Posterior vena cava (tissue), 2 donors: ENCODE measurements at regions of chr1 and their contacts with region 1.

Region 1: DNA sequence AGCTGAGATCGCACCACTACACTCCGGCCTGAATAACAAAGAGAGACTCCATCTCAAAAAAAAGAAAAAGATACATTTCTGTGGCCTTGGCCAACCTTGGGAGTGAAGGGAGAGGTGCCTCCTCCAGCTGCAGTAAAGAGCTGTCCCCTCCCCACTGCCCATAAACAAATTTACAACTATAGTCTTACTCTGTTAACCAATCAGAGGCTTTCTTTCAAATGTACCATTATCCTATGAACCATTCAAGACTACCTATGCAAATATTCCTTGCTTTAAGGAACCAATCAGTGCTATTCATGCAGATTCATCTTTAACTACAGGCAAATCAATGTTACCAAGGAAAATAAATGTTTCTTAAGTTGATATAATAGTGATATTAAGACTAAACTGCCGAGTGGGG is 1.0 kb downstream of the CELA2B start:
- DNase-seq: no peak

Region 2: GRCh38 chr1:15430787-15431570 is 45.9 kb before region 1 on chr1:
- intact Hi-C with region 1: no loop called
- DNase-seq: peak; percentile 89

Region 3: DNA sequence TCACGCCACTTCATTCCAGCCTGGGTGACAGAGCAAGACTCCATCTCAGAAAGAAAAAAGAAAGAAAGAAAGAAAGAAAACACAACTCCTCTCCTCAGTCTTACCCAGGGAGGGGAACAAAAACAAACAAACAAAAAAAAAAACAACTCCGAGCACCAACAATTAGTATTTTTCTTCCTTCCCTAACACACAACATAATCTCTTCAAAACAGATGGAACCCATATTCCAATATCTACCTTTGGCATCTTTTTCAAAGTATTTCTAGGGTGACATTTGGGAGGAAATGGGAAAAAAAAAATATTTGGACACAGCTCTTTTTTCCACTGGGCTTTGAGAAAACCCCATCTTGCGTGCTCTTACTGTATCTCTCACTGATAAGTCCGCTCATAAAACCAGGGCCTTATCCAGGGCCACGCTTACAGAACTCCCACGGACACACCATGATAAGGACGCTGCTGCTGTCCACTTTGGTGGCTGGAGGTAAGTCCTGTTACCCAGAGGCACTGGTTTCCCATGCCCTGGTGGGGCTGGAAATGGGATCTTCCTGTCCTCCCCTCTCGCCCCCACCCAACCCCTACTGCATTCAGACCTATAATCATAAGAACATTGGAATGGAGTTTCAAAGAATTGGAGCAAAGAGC is 20.5 kb before region 1 on chr1 and contains the start of gene CELA2A:
- intact Hi-C with region 1: loop called in 1 of 2 experiments (anchors 1 kb)
- DNase-seq: no peak
- total RNA-seq, gene CELA2A: 1.6 TPM in 1 of 2 donors, not detected in the other

Region 4: DNA sequence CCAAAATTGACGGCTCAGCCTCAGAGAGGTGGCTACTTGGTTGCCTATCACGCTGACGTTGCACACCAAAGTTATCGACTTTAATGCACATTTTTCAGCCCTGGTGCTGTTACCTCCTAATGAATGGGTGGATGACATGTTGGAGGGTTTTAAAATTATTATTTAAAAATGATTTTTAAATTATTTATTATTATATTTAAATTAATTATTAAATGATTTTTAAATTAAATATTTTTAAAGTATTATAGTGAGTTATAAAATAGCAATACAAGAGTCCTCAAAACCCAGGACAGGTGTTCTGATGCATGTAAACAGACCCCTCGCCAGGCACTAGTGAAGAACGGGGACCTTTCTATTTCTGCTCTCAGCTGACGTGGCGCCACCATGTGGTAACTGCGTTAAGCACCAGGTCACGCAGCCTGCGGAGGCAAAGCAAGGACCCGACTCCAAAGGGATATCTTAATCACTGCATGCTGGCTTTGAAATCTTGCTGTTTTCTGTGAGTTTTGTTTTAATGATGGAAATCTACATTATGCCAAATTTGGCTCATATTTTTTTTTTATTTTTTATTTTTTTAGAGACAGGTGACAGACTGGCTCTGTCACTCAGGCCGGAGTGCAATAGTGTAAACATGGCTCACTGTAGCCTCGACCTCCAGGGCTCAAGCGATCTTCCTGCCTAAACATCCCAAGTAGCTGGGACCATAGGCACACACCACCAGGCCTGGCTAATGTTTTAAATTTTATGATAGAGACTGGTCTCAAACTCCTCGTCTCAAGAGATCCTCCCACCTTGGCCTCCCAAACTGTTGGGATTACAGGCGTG is 24.5 kb after region 1 on chr1:
- intact Hi-C with region 1: no loop called
- DNase-seq: peak; percentile 80